ENCODE measurements at regions of chr5 and their contacts with region 1.

Region 1: DNA sequence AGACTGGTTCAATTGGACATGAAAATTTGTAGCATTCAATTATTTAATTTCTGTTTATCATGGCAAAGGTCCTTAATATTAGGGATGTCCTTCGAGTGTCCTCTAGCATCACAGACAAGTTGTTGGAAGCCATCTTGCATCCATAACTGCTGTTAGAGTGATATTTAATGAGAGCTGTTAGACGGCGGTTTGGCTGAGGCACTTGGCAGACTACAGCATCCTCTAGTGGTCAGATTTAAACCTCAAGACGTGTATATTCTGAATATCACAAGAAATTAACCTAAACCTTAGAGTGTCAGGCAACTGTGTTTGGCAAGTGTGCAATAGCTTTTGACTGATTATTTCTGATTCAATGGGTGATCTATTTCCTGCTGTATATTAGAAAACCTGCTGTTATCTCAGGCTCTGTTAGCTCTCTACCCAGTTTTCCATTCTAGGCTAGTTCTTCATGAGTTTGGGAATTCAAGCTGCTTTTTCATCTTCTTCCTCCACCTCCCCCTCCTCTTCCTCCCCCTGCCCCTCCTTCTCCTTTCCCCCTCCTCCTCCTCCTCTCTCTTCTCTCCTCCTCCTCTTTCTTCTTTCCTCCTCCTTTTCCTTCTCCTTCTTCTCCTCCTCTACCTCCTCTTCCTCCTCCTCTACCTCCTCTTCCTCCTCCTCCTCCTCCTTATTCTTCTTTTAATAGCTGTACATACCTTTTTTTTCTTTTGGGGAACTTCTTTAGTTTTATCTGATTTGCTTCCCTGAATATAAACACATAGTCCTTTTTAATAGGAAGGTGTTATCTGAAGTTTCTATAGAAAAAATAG is 8.6 kb downstream of the SPINK1 start:
- DNase-seq: peak in 2 of 4 experiments; percentile 7 to 23
- ATAC-seq: peak; percentile 64; the same call in 2 of the 3 replicates
- H3K4me3 ChIP-seq: no peak overlapping the region
- H3K27ac ChIP-seq: no peak overlapping the region
- H3K4me1 ChIP-seq: no peaks in the 10 kb centered on the region
- H3K27me3 ChIP-seq: no peaks in the 10 kb centered on the region
- CTCF ChIP-seq: peak; percentile 33 to 62 (median 58); a peak in 5 of 6 replicates
- EP300 ChIP-seq: no peak
- POLR2A ChIP-seq: no peak
- RAD21 ChIP-seq: peak; percentile 76 to 88

Region 2: GRCh38 chr5:147037515-147038205 is 785.2 kb before region 1 on chr5:
- CTCF ChIA-PET with region 1: no interaction called
- POLR2A ChIA-PET with region 1: no interaction called
- in situ Hi-C with region 1: no loop called
- intact Hi-C with region 1: loop called (anchors 5 kb)
- DNase-seq: no peak
- ATAC-seq: no peak
- H3K4me3 ChIP-seq: no peak overlapping the region
- H3K27ac ChIP-seq: no peak overlapping the region
- H3K4me1 ChIP-seq: no peaks in the 10 kb centered on the region
- H3K27me3 ChIP-seq: no peaks in the 10 kb centered on the region
- CTCF ChIP-seq: no peak
- EP300 ChIP-seq: no peak
- POLR2A ChIP-seq: no peak
- RAD21 ChIP-seq: no peak

Region 3: DNA sequence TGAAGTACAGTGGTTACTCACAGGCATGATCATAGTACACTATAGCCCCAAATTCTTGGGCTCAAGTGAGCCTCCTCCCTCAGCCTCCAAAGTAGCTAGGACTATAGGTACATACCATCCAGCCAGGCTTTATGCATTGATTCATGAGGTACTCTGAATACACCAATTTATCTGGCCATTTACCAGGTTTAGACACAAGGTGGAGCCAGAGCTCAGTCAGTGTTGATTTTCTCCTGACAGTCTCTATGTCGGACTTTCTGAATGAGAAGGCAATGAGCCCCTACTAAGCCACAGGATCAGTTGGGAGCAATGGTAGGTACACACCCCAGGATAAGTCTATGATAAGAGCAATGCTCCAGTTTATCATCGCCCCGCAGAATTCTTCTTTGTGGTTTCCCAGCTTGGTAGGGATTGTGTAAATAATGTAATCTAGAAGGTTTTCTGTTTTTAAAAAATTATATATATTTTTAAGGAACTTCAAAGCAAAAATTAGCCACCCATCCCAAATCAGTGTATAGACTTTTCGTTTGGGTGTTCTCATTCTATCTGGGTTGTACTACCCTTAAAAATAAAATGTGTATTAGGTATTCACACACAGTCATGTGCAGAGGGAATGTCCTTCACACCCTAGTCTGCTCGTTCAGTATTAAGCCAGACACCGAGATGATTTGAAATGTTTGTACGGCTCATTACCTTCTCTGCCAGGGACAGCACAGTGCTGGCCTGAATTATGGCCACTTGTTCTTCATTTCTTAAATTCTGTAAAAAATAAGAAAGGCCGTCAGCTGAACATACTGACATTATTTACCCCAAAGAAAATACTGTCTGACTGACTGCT is 194.6 kb before region 1 on chr5:
- CTCF ChIA-PET with region 1: interaction called, 8 read pairs
- POLR2A ChIA-PET with region 1: no interaction called
- in situ Hi-C with region 1: no loop called
- intact Hi-C with region 1: loop called (anchors 1 kb)
- DNase-seq: peak; percentile 17 to 55 (median 20)
- ATAC-seq: peak; percentile 71
- H3K4me3 ChIP-seq: no peak overlapping the region
- H3K27ac ChIP-seq: no peak overlapping the region
- H3K4me1 ChIP-seq: no peaks in the 10 kb centered on the region
- H3K27me3 ChIP-seq: no peaks in the 10 kb centered on the region
- CTCF ChIP-seq: peak; percentile 12 to 52 (median 48); a peak in 5 of 6 replicates
- EP300 ChIP-seq: no peak
- POLR2A ChIP-seq: no peak
- RAD21 ChIP-seq: peak; percentile 69 to 71

Measured in K562 (cell line).